H1 (cell line): ENCODE measurements at regions of chr19 and their contacts with region 1.

Region 1: GRCh38 chr19:57435062-57435978 is at the start of gene ZNF749:
- DNase-seq: peak; percentile 95 to 97
- H3K4me3 ChIP-seq: peak within 1 kb of the TSS; percentile 75 to 89 (median 81)
- H3K27ac ChIP-seq: peak within 1 kb of the TSS; percentile 88
- H3K4me1 ChIP-seq: peaks cover 0 to 7% (median under 1%) of the 10 kb centered on the region in 4 experiments; a peak in 2 of 7 replicates
- H3K27me3 ChIP-seq: no peaks in the 10 kb centered on the region
- CTCF ChIP-seq: no peak; a peak in 1 of 4 replicates
- EP300 ChIP-seq: no peak
- POLR2A ChIP-seq: peak; percentile 52 to 93
- RAD21 ChIP-seq: no peak
- total RNA-seq, gene ZNF749: 24.4 and 30.3 TPM in 2 replicates

Region 2: GRCh38 chr19:57334191-57334590 is 101.1 kb before region 1 on chr19:
- CTCF ChIA-PET with region 1: no interaction called
- POLR2A ChIA-PET with region 1: no interaction called
- DNase-seq: no peak
- H3K4me3 ChIP-seq: no peak overlapping the region
- H3K27ac ChIP-seq: no peak overlapping the region
- H3K4me1 ChIP-seq: no peaks in the 10 kb centered on the region
- H3K27me3 ChIP-seq: no peaks in the 10 kb centered on the region
- CTCF ChIP-seq: no peak
- EP300 ChIP-seq: no peak
- POLR2A ChIP-seq: no peak
- RAD21 ChIP-seq: no peak

Region 3: GRCh38 chr19:57355916-57356315 is 79.4 kb before region 1 on chr19:
- CTCF ChIA-PET with region 1: no interaction called
- POLR2A ChIA-PET with region 1: no interaction called
- DNase-seq: no peak
- H3K4me3 ChIP-seq: no peak overlapping the region
- H3K27ac ChIP-seq: no peak overlapping the region
- H3K4me1 ChIP-seq: peaks cover 0 to 4% (median 4%) of the 10 kb centered on the region in 4 experiments; a peak in 5 of 7 replicates
- H3K27me3 ChIP-seq: no peaks in the 10 kb centered on the region
- CTCF ChIP-seq: no peak
- EP300 ChIP-seq: no peak
- POLR2A ChIP-seq: no peak
- RAD21 ChIP-seq: no peak

Region 4: DNA sequence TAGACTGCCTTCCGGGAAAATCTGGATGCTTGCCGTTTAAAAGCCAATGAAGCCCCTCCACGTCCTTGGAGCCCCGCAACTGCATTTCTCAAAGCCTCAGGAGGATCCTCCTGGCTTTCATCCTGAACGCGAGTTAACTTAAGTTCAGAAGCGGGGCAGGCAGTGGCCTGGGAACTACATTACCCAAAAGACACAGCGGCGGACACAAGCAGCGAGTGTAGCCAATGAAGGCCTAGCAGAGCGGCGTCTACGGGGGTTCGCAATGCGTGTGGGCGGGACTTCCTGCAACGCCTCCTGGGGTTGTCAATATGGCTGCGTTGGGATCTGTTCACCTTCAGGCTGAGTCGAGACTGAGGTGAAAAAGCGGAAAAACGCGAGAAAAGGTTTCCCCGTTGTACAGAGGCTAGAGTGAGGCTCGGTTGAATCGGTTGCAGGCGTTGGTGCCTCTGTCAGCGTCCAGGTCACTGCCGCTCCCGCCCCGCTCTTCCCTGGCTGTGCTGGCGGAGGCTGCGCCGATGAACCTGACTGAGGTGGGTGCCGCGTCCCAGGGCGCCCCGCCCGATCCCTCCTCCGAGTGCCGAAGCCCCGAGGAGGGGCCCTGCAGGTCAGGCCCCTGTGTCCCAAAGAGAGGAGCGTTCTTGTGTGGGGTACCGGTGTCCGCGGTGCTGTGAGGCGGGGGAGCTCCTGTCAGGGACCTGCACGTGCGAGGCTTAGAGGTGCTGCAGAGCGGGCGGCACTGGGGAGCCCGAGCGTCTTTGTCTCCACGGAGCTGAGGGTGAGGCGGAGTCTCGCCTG is 24.2 kb before region 1 on chr19 and contains the start of gene ZNF17:
- CTCF ChIA-PET with region 1: interaction called, 10 read pairs
- POLR2A ChIA-PET with region 1: interaction called, 24 read pairs
- DNase-seq: peak in 1 of 2 experiments; percentile 87
- H3K4me3 ChIP-seq: peak within 1 kb of the TSS; percentile 69 to 97 (median 92)
- H3K27ac ChIP-seq: no peak within 1 kb of the TSS
- H3K4me1 ChIP-seq: no peaks in the 10 kb centered on the region; a peak in 1 of 7 replicates
- H3K27me3 ChIP-seq: no peaks in the 10 kb centered on the region; a peak in 1 of 7 replicates
- CTCF ChIP-seq: no peak
- EP300 ChIP-seq: no peak
- POLR2A ChIP-seq: peak in 1 of 2 experiments; percentile 59; a peak in 1 of 3 replicates
- RAD21 ChIP-seq: no peak
- total RNA-seq, gene ZNF17: 7.9 and 10.2 TPM in 2 replicates

Region 5: DNA sequence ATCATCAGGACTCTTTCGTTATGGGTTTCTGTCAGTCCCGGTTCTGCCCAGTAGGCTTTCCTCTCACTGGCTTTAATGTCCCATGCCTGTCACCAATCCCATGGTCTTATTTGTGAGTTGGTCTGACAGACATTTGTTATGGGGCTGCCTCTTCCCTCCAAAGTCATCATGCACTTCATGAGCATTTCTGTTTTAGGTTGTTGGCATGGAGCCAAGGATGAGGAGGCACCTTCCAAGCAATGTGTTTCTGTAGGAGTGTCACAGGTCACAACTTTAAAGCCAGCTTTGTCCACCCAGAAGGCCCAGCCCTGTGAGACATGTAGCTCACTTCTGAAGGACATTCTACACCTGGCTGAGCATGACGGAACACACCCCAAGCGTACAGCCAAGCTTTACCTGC is 15.9 kb before region 1 on chr19:
- CTCF ChIA-PET with region 1: no interaction called
- POLR2A ChIA-PET with region 1: interaction called, 49 read pairs
- DNase-seq: no peak
- H3K4me3 ChIP-seq: no peak overlapping the region
- H3K27ac ChIP-seq: no peak overlapping the region
- H3K4me1 ChIP-seq: no peaks in the 10 kb centered on the region
- H3K27me3 ChIP-seq: no peaks in the 10 kb centered on the region
- CTCF ChIP-seq: no peak
- EP300 ChIP-seq: no peak
- POLR2A ChIP-seq: no peak
- RAD21 ChIP-seq: no peak

Region 6: DNA sequence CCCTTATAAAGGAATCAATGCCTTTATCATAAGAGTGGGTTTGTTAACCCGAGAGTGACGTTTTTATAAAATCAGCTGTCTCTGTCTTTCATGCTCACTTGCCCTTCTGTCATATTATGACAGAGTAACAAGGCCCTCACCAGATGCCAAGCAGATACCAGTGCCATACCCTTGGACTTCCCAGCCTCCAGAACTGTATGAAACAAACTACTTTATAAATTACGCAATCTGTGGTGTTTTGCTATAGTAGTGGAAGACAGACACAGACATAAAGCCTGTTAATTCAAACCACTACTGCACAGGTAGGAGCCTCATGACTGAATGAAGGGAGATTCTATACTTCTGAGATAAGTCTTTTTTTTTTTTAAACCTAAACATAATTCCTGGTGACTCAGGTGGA is 17.0 kb after region 1 on chr19:
- CTCF ChIA-PET with region 1: interaction called, 4 read pairs
- POLR2A ChIA-PET with region 1: interaction called, 43 read pairs
- DNase-seq: no peak
- H3K4me3 ChIP-seq: no peak overlapping the region
- H3K27ac ChIP-seq: no peak overlapping the region
- H3K4me1 ChIP-seq: no peaks in the 10 kb centered on the region
- H3K27me3 ChIP-seq: no peaks in the 10 kb centered on the region
- CTCF ChIP-seq: no peak
- EP300 ChIP-seq: no peak
- POLR2A ChIP-seq: no peak
- RAD21 ChIP-seq: no peak